Heart right ventricle (tissue), 16 donors: ENCODE measurements at regions of chr1 and their contacts with region 1.

Region 1: GRCh38 chr1:117121776-117122697 is 488 bp upstream of the TRIM45 start:
- DNase-seq: peak; percentile 96 to 98
- ATAC-seq: peak; percentile 97 to 99 (median 98)
- H3K4me3 ChIP-seq: peak overlapping the region; percentile 46 to 89 (median 72)
- H3K27ac ChIP-seq: peak overlapping the region; percentile 80 to 97 (median 93)
- H3K4me1 ChIP-seq: peaks cover 0 to 43% (median 24%) of the 10 kb centered on the region in 9 donors
- H3K27me3 ChIP-seq: no peaks in the 10 kb centered on the region
- CTCF ChIP-seq: peak; percentile 55 to 98 (median 79)

Region 2: DNA sequence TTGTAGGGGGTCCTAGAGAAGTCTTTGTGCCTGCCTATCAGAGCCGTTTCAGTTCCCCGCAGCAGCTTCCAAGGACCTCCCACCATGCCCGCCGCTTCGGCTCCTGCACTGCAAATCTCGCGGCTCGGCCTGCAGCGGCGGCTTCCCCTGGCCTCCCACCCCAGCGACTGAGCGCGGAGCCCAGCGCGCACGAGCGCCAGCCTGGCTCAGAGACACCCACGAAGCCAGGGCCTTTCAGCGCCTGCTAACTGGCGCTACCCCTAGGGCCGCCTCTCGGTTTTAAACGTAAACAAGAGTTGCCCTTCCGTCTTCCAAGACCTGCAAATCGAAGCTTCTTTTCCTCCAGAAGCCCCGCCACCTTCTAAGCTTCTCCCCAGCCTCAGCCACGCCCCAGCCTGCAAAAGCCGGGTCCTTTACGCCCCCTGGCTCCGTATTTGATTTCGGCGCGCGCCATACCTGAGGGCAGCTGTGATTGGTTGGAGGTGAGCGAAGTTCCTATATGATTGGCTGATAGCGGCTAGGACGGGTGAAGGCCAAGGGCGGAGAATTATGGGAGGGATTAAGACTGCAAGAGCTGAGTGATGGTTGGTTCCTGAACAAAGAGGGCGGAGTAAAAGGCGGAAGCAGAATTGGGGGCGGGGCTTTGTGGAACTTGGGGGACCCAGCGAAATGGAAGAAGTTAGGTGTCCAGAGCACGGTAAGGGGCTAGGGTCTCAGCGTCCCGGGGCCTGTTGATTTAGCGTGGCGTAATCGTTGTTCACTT is 62.2 kb before region 1 on chr1 and contains the start of gene TTF2:
- intact Hi-C with region 1: loop called in 6 of 10 experiments (anchors 5 to 10 kb)
- DNase-seq: peak; percentile 82 to 97
- ATAC-seq: peak; percentile 99 to 100 (median 99)
- H3K4me3 ChIP-seq: peak within 1 kb of the TSS; percentile 57 to 88 (median 78)
- H3K27ac ChIP-seq: peak within 1 kb of the TSS in 8 of 10 donors; percentile 7 to 82 (median 64)
- H3K4me1 ChIP-seq: peaks cover 0 to 25% (median 9%) of the 10 kb centered on the region in 9 donors
- H3K27me3 ChIP-seq: no peaks in the 10 kb centered on the region
- CTCF ChIP-seq: peak in 7 of 9 donors; percentile 15 to 57 (median 30)
- total RNA-seq, gene TTF2: 5.0 to 19.0 (median 10.4) TPM

Region 3: GRCh38 chr1:117067533-117068370 is 54.3 kb before region 1 on chr1:
- intact Hi-C with region 1: loop called in 7 of 10 experiments (anchors 5 to 10 kb)
- DNase-seq: peak in 1 of 2 donors; percentile 44
- ATAC-seq: peak; percentile 84 to 92 (median 88)
- H3K4me3 ChIP-seq: no peak overlapping the region
- H3K27ac ChIP-seq: no peak overlapping the region
- H3K4me1 ChIP-seq: no peaks in the 10 kb centered on the region
- H3K27me3 ChIP-seq: no peaks in the 10 kb centered on the region
- CTCF ChIP-seq: peak; percentile 47 to 86 (median 80)

Region 4: GRCh38 chr1:117077267-117077666 is 44.8 kb before region 1 on chr1:
- intact Hi-C with region 1: loop called in 2 of 10 experiments (anchors 5 to 10 kb)
- DNase-seq: no peak
- ATAC-seq: no peak
- H3K4me3 ChIP-seq: no peak overlapping the region
- H3K27ac ChIP-seq: no peak overlapping the region
- H3K4me1 ChIP-seq: peaks cover 0 to 9% (median 0%) of the 10 kb centered on the region in 9 donors
- H3K27me3 ChIP-seq: no peaks in the 10 kb centered on the region
- CTCF ChIP-seq: no peak

Region 5: DNA sequence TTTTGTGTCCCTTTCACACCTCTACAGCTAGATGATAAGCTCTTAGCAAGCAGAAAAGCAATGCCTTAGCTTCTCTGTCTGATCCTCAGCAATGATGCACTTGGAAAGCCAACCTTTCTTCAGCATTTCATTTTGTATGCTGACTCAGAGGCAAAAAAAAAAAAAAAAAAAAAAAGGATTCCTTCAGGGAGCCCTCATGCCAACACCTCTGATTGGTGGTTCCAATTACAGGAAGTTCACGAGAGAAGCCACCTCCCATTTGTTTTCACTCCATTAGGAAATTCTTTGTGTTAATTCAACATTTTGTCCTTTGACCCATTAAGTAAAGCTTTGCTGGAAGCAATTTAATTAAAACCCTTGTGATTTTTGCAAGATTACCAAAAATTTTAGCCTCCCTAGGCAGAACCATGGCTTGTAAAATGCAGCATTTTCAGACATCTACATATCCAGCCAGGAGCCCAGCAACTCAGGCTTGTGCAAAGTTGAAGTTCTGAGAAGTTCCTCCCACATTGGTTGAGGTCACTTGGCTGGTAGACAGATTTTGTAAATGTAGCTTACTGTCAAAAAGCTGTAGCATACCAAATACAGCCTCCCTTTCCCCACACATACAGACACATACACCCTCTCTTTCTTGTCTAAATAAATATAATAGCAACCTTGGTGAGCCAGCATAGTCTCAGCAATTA is 115.8 kb after region 1 on chr1:
- intact Hi-C with region 1: loop called in 2 of 10 experiments (anchors 10 kb)
- DNase-seq: no peak
- ATAC-seq: peak in 2 of 8 donors; percentile 22 to 41
- H3K4me3 ChIP-seq: no peak overlapping the region
- H3K27ac ChIP-seq: no peak overlapping the region
- H3K4me1 ChIP-seq: peaks cover 0 to 27% (median 6%) of the 10 kb centered on the region in 9 donors
- H3K27me3 ChIP-seq: no peaks in the 10 kb centered on the region
- CTCF ChIP-seq: no peak

Region 6: GRCh38 chr1:117284399-117285215 is 162.6 kb after region 1 on chr1:
- intact Hi-C with region 1: loop called in 8 of 10 experiments (anchors 2 to 10 kb)
- DNase-seq: no peak
- ATAC-seq: peak in 7 of 8 donors; percentile 47 to 78 (median 71)
- H3K4me3 ChIP-seq: no peak overlapping the region
- H3K27ac ChIP-seq: no peak overlapping the region
- H3K4me1 ChIP-seq: no peaks in the 10 kb centered on the region
- H3K27me3 ChIP-seq: peaks cover 0 to 5% (median 0%) of the 10 kb centered on the region in 7 donors
- CTCF ChIP-seq: peak; percentile 9 to 76 (median 55)

Region 7: DNA sequence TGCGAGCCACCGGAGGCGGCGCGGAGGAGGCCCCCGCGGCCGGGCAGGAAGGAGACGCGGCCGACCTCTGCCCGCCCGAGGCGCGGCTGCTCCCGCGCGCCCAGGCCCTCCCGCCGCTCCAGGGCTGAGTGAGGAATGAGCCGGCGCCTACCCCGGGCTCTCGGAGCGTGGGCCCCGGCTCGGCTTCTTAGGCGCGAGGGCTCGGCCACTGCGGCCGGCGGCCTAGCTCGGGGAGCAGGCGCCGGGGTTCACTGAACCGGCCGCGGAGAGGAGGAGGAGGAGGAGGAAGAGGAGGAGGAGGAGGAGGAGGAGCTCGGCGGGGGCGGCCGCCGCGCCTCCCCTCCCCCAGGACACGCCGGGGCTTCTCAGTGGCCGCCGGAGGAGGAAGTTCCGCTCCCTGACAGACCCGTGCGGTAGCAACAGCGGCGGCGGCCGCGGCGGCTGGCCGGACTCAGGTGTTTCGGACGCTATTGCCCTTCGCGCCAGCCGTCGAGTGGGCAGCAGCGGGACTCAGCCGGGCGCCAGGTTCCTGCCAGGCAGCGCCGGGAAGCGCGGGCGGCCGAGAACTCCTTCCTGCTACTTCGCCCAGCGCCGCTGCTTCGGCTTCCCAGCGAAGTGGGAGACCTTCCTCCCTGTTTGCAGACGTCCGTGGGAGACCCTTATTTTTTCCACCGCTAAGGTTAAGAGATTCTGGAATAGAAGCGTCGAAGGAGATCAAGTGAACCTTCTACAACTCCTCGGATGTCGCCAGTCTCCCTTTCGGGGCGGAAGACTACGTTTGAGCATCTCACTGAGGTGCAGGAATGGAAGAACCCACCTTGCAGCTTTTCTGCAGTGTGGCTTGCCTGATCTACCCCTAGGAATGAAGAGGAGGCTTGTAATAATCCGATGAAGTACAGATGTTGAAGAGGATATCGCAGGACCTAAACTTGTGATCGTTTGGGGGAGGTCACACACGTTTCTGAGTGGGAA is 245.3 kb after region 1 on chr1 and contains the start of gene MAN1A2:
- intact Hi-C with region 1: loop called in 2 of 10 experiments (anchors 5 to 10 kb)
- DNase-seq: peak; percentile 91
- ATAC-seq: peak; percentile 92 to 97 (median 96)
- H3K4me3 ChIP-seq: peak within 1 kb of the TSS; percentile 78 to 96 (median 90)
- H3K27ac ChIP-seq: peak within 1 kb of the TSS; percentile 93 to 100 (median 98)
- H3K4me1 ChIP-seq: peaks cover 0 to 67% (median 58%) of the 10 kb centered on the region in 9 donors
- H3K27me3 ChIP-seq: no peaks in the 10 kb centered on the region
- CTCF ChIP-seq: no peak
- total RNA-seq, gene MAN1A2: 22.6 to 37.3 (median 26.3) TPM